Common myeloid progenitor, CD34-positive (primary cell): ENCODE measurements at regions of chr2 and their contacts with region 1.

Region 1: DNA sequence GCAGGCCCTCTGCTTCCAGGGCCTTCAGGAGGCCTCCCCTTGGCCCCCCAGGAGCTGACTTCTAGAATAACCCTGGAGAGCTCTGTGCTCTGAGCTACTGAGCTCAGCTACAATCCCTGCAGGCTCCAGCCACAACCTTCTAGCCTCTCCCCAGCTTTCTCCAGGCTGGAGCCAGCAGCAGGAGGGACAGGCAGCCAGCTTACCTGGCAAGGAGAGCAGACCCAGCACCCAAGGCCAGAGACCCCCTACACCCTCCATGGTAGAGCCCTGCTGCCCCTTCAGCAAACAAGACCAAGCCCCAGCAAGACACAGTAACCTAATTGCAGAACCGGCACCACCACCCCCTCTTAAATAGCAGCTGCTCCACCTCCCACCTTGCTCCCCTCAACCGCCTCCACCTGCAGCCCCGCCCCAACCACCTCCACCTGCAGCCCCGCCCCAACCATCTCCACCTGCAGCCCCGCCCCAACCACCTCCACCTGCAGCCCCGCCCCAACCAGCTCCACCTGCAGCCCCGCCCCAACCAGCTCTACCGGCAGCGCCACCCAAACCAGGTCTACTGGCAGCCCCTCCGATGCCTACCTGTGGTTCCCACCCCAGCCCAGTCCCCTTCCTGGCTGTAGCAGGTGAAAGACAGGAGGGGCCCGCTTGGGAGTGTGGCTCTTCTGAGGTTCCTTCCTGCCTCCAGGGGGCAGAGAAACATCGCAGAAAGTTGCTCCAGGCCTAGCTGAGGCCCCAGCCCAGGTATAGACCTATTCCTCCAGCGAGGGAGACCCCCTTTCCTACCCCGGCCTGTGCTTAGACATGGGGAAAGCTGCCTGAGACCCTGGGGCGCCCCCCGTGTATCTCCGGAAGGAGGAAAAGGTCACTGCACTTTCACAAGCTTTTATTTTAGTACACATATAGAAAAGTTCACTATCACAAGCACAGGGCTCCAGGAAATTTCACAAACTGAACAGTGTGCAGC is at the start of gene ASTL:
- DNase-seq: peak; percentile 70 to 79 (median 73)
- H3K4me3 ChIP-seq: no peak within 1 kb of the TSS
- H3K27ac ChIP-seq: no peak within 1 kb of the TSS
- H3K4me1 ChIP-seq: peaks cover 0 to 16% (median 8%) of the 10 kb centered on the region in 4 experiments
- H3K27me3 ChIP-seq: peaks cover 0 to 4% (median 0%) of the 10 kb centered on the region in 5 experiments

Region 2: GRCh38 chr2:96024336-96025193 is 113.9 kb before region 1 on chr2:
- CTCF ChIA-PET with region 1: interaction called, 14 read pairs
- POLR2A ChIA-PET with region 1: no interaction called
- DNase-seq: no peak
- H3K4me3 ChIP-seq: no peak overlapping the region
- H3K27ac ChIP-seq: no peak overlapping the region
- H3K4me1 ChIP-seq: no peaks in the 10 kb centered on the region
- H3K27me3 ChIP-seq: no peaks in the 10 kb centered on the region

Region 3: DNA sequence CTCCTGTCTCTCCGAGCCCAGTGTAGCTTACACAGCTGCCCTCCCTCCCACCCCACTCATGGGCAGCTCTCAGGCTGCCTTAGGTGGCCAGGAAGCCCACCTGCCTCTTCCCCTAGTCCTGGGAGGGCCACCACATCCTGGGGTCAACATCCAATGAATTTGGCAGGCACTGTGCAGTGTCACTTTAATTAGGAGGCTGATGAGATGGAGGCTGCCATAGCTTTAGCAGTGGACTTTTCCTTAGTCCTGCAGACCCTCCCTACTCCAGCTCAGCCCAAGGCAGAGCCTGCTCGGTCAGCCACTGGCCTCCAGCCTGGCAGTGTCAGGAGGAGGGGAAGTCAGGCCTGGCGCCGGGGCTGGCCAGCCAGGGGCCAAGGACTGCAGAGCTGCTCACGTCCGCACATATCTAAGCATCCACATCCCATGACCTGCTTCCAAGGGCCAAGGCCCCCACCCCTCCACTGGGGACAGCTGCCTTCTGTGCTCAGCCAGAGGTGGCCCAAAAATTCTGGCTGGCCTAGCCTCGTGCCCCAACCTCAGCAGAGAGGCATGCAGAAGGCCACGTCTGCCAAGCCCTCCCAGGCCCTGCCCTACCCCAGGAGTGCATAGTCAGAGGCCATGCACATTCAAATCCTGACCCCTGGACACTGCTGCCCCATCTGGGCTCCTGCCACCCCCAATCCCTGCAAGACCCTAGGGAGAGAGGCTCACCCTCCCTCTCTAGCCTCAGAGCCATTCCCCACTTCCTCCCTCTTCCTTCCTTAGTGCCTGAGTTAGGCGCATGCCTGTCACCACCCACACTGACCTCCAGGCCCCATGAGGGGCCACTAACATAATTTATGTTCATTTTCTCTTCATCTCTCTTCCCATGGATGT is 55.2 kb before region 1 on chr2:
- CTCF ChIA-PET with region 1: no interaction called
- POLR2A ChIA-PET with region 1: no interaction called
- DNase-seq: no peak
- H3K4me3 ChIP-seq: no peak overlapping the region
- H3K27ac ChIP-seq: no peak overlapping the region
- H3K4me1 ChIP-seq: no peaks in the 10 kb centered on the region
- H3K27me3 ChIP-seq: no peaks in the 10 kb centered on the region

Region 4: DNA sequence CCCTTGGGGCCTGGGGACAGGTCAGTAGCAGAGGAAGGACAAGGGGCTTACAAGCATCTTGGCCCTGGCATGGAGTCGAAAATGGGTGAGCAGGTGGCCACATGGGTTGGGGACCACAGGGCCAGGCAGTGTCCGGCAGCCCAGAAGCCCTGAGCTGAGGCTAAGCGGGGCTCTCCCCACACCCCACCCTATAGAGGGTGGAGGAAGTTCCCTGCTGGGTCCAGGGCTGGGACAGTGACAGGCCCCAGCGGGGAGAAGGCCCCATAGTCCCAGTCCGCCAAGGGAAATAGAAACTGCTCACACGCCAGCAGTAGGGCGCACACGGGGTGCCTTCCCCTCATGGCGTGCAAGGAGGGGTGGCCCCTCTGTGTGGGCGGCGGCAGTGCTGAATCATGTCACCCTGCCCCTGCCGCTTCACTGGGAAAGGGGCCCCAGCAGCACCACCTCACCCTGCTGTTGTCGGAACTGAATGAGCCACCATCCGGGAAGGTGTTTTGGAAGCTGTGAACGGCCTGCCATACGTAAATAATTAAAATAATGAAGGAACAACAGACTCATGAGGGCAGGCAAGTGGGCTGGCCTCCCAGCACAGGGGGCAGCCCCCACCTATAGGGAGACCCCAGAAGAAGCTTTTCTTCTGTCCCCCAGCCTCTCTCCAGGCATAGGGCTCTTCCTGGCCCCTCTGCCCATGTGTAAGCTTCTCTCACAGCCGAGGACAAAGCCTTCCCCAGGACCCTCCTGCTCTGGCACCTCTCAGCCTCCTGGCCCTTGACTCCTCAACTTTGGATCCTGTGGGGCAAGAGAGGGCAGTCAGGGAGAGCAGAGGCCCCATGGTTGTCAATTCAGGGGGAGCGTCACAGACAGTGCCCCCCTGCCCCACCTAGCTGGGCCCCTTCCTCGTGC is 19.4 kb after region 1 on chr2:
- CTCF ChIA-PET with region 1: interaction called, 26 read pairs
- POLR2A ChIA-PET with region 1: no interaction called
- DNase-seq: peak; percentile 81 to 89 (median 86)
- H3K4me3 ChIP-seq: peak overlapping the region in 4 of 7 experiments; percentile 8 to 55 (median 25)
- H3K27ac ChIP-seq: peak overlapping the region; percentile 40 to 71
- H3K4me1 ChIP-seq: peaks cover 0 to 39% (median 24%) of the 10 kb centered on the region in 4 experiments
- H3K27me3 ChIP-seq: no peaks in the 10 kb centered on the region

Region 5: DNA sequence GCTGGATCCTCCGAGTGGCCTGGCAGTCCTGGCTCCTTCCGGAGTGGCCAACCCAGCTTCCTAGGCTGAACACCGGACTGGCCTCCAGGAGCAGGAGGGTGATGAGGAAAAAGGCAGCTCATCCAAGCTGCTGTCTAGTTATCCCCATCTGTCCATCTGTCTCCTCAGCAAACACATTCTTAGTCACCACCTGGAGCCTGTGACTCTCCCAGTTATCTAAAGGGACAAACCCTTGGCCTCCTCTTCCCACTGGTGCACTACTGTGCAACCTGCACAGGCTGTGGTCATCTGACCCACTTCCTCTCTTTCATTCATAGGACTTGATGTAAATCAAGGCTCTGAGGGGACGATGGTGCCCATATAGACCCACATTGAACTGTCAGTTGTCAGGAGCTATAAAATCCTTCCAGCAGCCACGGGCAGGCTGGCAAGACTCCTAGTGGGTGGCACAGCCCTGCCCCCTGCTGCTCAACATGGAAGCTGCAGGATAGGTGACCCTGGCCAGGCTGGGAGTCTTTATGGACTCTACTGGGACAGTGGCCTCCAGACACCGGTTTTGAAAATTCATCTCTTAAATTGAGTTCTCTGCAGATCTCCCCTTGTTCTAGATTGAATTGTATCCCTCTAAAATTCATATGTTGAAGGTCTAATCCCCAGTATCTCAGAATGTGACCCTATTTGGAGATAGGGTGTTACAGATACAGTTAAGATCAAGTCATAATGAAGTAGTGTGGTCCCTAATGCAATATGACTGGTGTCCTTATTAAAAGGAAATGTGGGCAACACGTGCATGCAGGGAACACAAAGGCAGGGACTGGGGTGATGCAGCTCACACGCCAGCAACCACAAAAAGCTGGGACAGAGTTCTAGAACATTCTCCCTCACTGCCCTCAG is 36.0 kb after region 1 on chr2:
- CTCF ChIA-PET with region 1: interaction called, 346 read pairs
- POLR2A ChIA-PET with region 1: interaction called, 13 read pairs
- DNase-seq: peak; percentile 64 to 83 (median 75)
- H3K4me3 ChIP-seq: no peak overlapping the region
- H3K27ac ChIP-seq: no peak overlapping the region
- H3K4me1 ChIP-seq: peaks cover 0 to 2% (median 0%) of the 10 kb centered on the region in 4 experiments
- H3K27me3 ChIP-seq: no peaks in the 10 kb centered on the region

Region 6: DNA sequence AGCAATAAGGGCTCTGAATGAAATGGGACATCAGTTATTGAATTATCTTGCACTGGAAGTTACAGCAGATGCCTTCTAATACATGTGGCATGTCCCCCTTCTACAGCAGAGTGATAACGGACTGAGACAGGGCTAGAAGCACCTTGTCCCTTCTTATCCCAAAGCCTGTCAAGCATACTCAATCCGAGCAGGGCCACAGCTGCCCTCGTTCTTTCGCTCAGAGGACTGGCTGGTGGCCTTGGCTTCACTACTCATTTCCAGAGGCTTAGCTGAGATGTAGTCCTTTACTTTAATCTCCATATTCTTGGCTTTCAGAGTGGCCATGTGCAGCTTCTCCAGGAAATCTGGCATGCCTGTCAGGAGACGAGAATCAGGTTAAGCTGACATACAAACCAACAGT is 48.1 kb after region 1 on chr2:
- CTCF ChIA-PET with region 1: interaction called, 23 read pairs
- POLR2A ChIA-PET with region 1: no interaction called
- DNase-seq: no peak
- H3K4me3 ChIP-seq: no peak overlapping the region
- H3K27ac ChIP-seq: no peak overlapping the region
- H3K4me1 ChIP-seq: no peaks in the 10 kb centered on the region
- H3K27me3 ChIP-seq: no peaks in the 10 kb centered on the region